ENCODE measurements at regions of chr7 and their contacts with region 1.

Region 1: DNA sequence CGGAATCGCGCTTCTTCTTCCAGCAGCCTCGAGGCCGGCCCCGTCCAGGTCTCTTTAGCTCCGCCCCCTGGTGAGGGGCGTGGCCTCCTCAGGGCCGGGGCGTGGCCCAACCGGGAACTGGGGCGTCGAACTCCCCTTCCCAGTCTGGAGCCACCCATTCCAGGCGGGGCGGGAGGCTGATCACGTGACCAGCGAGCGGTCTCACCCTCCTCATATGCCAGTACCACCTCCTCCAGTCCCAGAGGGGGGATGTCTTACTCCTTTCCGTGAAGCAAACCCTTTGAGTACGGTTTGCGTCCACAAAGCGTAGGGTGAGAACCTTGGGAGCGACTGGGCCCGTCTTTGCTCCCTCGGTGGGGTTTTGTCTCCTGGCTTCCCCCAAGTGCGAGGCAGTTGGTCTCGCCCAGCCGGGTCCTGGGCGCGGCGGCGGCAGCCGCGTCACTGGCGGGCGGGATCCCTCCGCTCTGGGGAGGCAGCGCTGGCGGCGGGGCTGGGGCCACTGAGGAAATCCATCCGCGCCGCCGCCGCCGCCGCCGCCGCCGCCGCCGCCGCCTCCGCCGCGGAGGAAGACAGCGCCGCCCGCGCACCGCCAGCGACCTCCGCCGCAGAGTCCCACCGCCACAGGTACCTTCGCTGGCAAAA is at the start of gene GNB2:
- DNase-seq: peak; percentile 98 to 99
- ATAC-seq: peak; percentile 90
- H3K4me3 ChIP-seq: peak within 1 kb of the TSS; percentile 95 to 100 (median 97)
- H3K27ac ChIP-seq: peak within 1 kb of the TSS; percentile 96 to 100 (median 99)
- H3K4me1 ChIP-seq: peaks cover 0 to 8% of the 10 kb centered on the region in 2 donors
- H3K27me3 ChIP-seq: no peaks in the 10 kb centered on the region
- CTCF ChIP-seq: peak in 2 of 5 experiments; percentile 43 to 53
- POLR2A ChIP-seq: peak; percentile 83 to 87
- total RNA-seq, gene GNB2: 108 to 163 (median 129) TPM

Region 2: DNA sequence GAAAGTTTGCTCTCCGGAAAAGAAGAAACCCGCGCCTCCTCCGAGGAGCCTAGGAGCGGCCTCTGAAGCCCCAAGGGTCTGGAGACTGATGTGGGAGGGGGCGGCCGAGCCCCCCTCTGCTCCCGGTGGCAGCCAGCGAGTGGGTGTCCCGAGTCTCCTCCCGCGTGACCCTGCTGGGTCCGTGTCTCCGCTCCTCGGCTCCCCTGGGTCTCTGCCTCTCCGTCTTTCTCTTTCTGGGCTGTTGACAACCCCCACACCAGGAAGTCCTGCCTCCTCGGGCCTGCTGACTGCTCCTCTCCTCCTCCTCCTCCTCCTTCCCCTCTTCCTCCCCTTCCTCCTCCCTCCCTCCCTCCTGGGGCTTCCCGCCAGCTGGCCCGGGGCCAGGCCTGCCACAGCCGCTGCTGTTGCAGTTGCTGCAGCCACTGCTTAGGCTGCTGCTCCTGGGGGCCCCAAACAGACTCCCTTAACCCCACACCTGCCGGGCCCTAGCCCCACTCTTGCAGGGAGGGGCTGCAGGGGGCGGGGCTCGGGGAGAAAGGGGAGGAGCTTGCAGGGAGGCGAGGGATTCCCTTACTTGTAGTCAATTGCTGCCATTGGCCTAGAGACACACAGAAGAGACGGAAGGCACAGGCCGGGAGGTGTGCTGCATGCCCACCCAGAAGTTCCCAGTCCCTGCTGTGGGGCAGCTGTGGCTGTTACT is 194.3 kb before region 1 on chr7 and contains the start of gene TSC22D4:
- in situ Hi-C with region 1: no loop called
- intact Hi-C with region 1: loop called (anchors 10 kb)
- DNase-seq: peak; percentile 95
- ATAC-seq: peak; percentile 97 to 98
- H3K4me3 ChIP-seq: peak within 1 kb of the TSS; percentile 96 to 100 (median 98)
- H3K27ac ChIP-seq: peak within 1 kb of the TSS; percentile 90 to 99 (median 94)
- H3K4me1 ChIP-seq: peaks cover 33 to 36% of the 10 kb centered on the region in 2 donors
- H3K27me3 ChIP-seq: no peaks in the 10 kb centered on the region
- CTCF ChIP-seq: no peak
- POLR2A ChIP-seq: peak; percentile 79 to 90
- total RNA-seq, gene TSC22D4: 14.3 to 25.5 (median 21.2) TPM

Region 3: DNA sequence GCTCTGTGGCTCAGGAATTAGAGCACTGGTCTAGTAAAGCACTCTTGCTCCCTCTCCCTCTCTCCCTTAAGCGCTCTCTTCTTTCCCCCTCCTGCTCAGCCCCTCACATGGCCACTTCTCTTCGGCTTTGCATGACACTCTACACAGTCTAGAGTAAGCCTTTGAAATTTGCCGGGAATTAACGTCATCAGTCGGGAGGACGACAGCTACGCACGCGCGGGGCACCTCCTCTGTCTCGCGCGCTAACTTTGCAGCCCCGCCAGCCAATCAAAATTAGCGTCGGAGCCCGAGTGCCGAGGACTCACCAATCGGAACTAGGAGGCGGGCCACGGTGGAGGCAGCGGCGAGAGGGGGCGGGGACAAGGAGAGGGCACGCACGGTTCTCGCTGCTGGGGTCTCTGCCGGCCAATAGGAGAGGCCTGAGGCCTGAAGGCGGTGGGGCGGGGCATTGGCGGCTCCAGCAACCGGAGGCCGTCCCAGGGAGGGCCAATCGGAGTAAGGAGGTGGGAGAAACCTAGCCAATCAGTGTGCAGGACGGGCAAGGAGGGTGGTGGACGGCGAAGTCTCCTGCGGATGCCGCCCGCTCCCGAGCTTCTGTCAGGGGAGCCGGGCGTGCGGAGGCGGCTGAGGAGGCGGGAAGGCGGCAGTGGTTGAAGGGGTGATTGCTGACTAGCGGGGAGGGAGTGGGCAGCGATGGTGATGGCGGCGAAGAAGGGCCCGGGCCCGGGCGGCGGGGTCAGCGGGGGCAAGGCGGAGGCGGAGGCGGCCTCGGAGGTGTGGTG is 134.6 kb before region 1 on chr7 and contains the start of gene AGFG2:
- in situ Hi-C with region 1: no loop called
- intact Hi-C with region 1: loop called (anchors 1 kb)
- DNase-seq: peak; percentile 100
- ATAC-seq: peak; percentile 98
- H3K4me3 ChIP-seq: peak within 1 kb of the TSS; percentile 74 to 97 (median 82)
- H3K27ac ChIP-seq: peak within 1 kb of the TSS; percentile 60 to 85 (median 80)
- H3K4me1 ChIP-seq: peaks cover 8 to 20% of the 10 kb centered on the region in 2 donors
- H3K27me3 ChIP-seq: no peaks in the 10 kb centered on the region
- CTCF ChIP-seq: no peak
- POLR2A ChIP-seq: peak; percentile 39 to 53
- total RNA-seq, gene AGFG2: 10.7 to 16.4 (median 13.5) TPM

Region 4: DNA sequence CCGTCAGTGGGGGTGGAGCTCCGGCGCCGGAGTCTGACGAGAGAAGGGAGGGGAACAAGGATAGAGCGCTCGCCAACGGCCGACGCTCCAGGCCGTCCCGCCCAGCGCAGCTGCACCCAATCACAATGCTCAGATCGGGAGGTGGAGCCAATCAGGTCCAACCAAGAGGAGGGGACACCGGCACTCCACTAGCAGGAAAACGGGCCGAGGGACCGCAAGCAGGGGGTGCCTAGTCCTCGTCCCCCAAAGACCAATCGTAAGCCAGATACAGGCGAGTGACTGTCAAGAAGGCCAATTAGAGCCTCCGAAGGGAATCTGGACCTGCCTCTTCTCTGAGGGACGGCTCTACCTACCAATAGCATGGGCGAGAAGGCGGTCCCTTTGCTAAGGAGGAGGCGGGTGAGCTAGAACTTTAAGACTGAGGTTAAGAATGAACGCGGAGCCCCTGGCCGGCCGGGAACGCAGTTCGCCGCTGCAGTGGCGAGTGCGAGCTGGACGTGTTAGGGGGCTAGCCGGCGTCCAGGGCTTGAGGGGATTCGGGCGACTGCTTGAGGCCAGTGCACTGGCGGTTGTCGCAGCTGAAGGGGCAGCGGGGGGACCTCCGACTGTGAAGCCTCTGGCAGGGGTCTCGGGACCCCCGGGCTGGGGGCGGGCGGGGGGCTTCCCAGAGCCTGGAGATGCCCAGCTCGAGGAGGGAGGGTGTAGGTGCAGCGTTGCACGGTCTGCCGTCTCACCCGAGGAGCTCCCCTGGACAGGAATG is 87.0 kb before region 1 on chr7 and contains the start of gene FBXO24:
- in situ Hi-C with region 1: no loop called
- intact Hi-C with region 1: loop called (anchors 1 kb)
- DNase-seq: peak; percentile 100
- ATAC-seq: peak; percentile 96 to 98
- H3K4me3 ChIP-seq: peak within 1 kb of the TSS; percentile 89 to 98 (median 96)
- H3K27ac ChIP-seq: peak within 1 kb of the TSS; percentile 92 to 97 (median 96)
- H3K4me1 ChIP-seq: peaks cover 11 to 30% of the 10 kb centered on the region in 2 donors
- H3K27me3 ChIP-seq: no peaks in the 10 kb centered on the region
- CTCF ChIP-seq: no peak
- POLR2A ChIP-seq: no peak
- total RNA-seq, gene FBXO24: not detected

Region 5: GRCh38 chr7:100611974-100612729 is 61.3 kb before region 1 on chr7 and contains the start of gene MOSPD3:
- in situ Hi-C with region 1: no loop called
- intact Hi-C with region 1: loop called (anchors 1 kb)
- DNase-seq: peak; percentile 98 to 99
- ATAC-seq: peak; percentile 99 to 100
- H3K4me3 ChIP-seq: peak within 1 kb of the TSS; percentile 69 to 91 (median 76)
- H3K27ac ChIP-seq: peak within 1 kb of the TSS; percentile 90 to 99 (median 96)
- H3K4me1 ChIP-seq: peaks cover 0 to 14% of the 10 kb centered on the region in 2 donors
- H3K27me3 ChIP-seq: no peaks in the 10 kb centered on the region
- CTCF ChIP-seq: no peak
- POLR2A ChIP-seq: peak; percentile 74 to 75
- total RNA-seq, gene MOSPD3: 3.5 to 9.1 (median 4.6) TPM

Region 6: DNA sequence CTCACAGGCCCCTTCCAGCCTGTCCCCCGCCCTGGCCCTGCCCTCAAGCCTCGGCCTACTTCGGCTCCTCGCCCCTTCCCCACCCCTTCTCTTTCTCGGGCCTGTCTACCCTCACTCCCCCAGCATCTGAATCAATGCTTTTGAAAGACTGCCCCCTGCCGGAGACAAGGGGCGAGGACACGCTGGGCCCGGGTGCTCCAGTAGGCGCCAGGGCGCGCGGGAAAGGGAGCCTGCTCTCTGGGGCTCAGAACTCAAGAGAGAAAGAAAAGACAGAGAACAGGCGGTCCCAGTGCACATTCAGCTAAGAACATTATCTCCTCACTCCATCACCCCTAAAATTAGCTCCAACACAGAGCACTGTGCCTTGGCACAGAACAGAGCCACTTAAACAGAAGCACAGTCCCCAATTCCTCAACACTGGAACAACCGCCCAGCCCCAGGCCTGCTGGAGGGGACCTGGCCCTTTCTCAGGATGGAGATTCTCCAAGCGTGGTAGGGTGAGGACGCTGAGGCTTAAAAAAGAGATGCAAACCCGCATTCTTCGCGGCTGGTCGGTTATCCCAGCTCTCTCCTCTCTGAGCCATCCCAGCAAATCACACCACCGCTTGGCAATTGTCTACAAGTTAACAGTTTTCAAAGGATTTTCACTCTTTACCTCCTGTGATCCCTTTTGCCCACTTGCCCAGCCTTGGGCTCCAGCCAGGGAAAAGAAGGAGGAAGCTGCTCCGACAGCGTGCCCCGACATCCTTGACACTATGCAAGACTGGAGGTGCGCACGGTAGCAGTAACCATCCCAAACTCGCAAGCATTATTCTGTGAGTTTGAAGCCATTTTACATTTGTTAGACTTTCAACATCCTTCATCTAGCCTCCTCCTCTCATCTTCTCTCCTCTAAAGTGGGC is 18.5 kb after region 1 on chr7:
- in situ Hi-C with region 1: no loop called
- intact Hi-C with region 1: loop called (anchors 2 kb)
- DNase-seq: peak; percentile 59 to 68
- ATAC-seq: peak; percentile 55 to 73
- H3K4me3 ChIP-seq: peak overlapping the region; percentile 37 to 89 (median 71)
- H3K27ac ChIP-seq: peak overlapping the region; percentile 69 to 84 (median 77)
- H3K4me1 ChIP-seq: peaks cover 44 to 48% of the 10 kb centered on the region in 2 donors
- H3K27me3 ChIP-seq: no peaks in the 10 kb centered on the region
- CTCF ChIP-seq: peak; percentile 78 to 93 (median 89)
- POLR2A ChIP-seq: no peak

Region 7: DNA sequence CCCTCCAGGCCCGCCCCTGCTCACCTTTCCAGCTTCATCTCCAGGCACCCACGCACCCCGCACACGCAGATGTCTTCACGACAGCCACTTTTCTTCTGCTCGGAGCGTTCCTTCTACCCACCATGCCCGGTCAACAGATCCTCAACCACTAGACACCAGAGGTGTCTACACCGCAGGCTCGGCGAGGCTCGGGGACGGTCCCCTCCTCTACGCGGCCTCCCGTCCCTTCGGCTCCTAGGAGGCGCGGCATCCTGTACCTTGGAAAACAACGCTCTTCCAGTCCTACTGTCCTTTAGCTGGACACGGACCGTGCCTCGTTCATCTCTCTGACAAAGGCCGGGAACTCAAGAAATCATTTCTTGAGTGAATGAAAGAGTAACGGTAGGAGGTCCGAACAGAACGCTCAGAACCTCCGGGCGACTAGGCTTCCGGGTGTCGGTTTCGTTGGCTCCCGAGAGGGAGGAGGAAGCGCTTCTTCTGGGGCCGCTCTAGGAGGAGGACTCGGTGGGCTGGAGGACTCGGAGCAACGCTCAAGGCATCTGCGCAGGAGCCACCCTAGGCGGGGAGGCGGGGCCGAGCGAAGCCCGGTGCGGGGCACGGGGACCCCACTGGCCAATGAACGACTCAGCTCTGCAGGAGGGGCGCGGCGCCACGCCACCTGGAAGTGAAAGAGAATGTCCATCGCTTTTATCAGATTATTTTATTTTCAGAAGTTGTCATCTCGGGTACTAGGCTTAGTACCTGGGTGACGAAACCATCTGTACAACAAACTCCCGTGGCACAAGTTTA is 578.6 kb after region 1 on chr7:
- in situ Hi-C with region 1: no loop called
- intact Hi-C with region 1: loop called (anchors 10 kb)
- DNase-seq: peak; percentile 94 to 96
- ATAC-seq: peak; percentile 99 to 100
- H3K4me3 ChIP-seq: peak overlapping the region; percentile 80 to 91 (median 90)
- H3K27ac ChIP-seq: peak overlapping the region; percentile 73 to 84 (median 81)
- H3K4me1 ChIP-seq: peaks cover 14 to 15% of the 10 kb centered on the region in 2 donors
- H3K27me3 ChIP-seq: peaks cover 0 to 4% (median 0%) of the 10 kb centered on the region in 3 donors
- CTCF ChIP-seq: no peak
- POLR2A ChIP-seq: peak; percentile 12 to 46